Prostate gland (tissue), 2 donors: ENCODE measurements at regions of chr20 and their contacts with region 1.

Region 1: GRCh38 chr20:2651772-2652723 is at the start of gene NOP56:
- DNase-seq: peak; percentile 87
- H3K4me3 ChIP-seq: peak within 1 kb of the TSS; percentile 77 to 91
- H3K27ac ChIP-seq: peak within 1 kb of the TSS; percentile 81 to 82
- H3K4me1 ChIP-seq: peaks cover 8% of the 10 kb centered on the region
- H3K27me3 ChIP-seq: no peaks in the 10 kb centered on the region
- CTCF ChIP-seq: peak in 2 of 4 experiments; percentile 2 to 21
- POLR2A ChIP-seq: peak; percentile 63
- total RNA-seq, gene NOP56: 50.8 to 108 TPM

Region 2: GRCh38 chr20:2261105-2261504 is 390.9 kb before region 1 on chr20:
- intact Hi-C with region 1: no loop called
- DNase-seq: no peak
- H3K4me3 ChIP-seq: no peak overlapping the region
- H3K27ac ChIP-seq: no peak overlapping the region
- H3K4me1 ChIP-seq: peaks cover 4% of the 10 kb centered on the region
- H3K27me3 ChIP-seq: no peaks in the 10 kb centered on the region
- CTCF ChIP-seq: no peak
- POLR2A ChIP-seq: no peak

Region 3: GRCh38 chr20:2523919-2524708 is 127.9 kb before region 1 on chr20:
- intact Hi-C with region 1: loop called (anchors 2 kb)
- DNase-seq: peak; percentile 79
- H3K4me3 ChIP-seq: peak overlapping the region; percentile 50 to 67
- H3K27ac ChIP-seq: peak overlapping the region; percentile 60 to 81
- H3K4me1 ChIP-seq: no peaks in the 10 kb centered on the region
- H3K27me3 ChIP-seq: no peaks in the 10 kb centered on the region
- CTCF ChIP-seq: peak; percentile 82 to 95 (median 92)
- POLR2A ChIP-seq: peak; percentile 69

Region 4: DNA sequence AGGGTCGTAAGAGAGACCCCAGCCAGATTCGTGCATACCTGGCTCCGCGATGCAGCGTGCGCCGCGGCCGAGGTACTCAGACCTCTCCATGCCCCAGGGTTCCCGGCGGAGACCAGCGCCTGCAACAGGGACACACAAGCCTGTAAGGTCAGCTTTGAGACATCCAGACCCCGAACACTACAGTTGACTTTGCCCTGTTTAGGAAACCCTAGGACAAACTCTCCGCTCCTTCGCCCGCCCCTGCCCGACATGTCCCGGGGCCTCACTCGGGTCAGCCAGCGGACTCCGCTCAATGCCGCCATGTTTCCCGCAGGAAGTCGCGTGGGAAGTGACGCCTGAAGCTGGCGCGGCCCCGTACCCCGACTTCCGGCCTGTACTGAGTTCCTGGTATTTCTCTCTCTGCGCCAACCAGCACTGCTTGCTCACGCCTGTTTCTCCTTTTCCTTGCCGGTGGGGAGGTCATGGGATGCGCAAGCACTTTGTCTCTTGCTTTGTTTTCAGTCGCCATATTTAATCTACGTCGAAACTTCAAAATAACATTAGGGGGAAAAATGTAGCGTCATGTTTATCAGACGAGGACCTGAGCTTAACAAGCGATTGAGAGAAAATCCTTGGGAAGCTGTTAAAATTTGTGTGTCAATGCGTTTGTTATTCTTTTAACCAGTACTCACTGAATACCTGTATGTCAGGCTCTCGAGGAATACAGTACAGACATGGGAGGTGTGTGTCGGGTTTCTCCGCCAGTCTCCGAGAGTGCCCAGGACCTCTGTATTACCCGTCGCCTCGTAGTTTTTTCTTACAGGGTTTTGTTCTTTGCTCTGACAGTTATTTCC is 12.1 kb after region 1 on chr20 and contains the start of gene IDH3B:
- intact Hi-C with region 1: loop called (anchors 1 kb)
- DNase-seq: peak; percentile 92
- H3K4me3 ChIP-seq: peak within 1 kb of the TSS; percentile 74 to 95
- H3K27ac ChIP-seq: peak within 1 kb of the TSS; percentile 88 to 90
- H3K4me1 ChIP-seq: peaks cover 3% of the 10 kb centered on the region
- H3K27me3 ChIP-seq: no peaks in the 10 kb centered on the region
- CTCF ChIP-seq: peak in 1 of 4 experiments; percentile 12
- POLR2A ChIP-seq: peak; percentile 77
- total RNA-seq, gene IDH3B: 132 to 141 TPM

Region 5: DNA sequence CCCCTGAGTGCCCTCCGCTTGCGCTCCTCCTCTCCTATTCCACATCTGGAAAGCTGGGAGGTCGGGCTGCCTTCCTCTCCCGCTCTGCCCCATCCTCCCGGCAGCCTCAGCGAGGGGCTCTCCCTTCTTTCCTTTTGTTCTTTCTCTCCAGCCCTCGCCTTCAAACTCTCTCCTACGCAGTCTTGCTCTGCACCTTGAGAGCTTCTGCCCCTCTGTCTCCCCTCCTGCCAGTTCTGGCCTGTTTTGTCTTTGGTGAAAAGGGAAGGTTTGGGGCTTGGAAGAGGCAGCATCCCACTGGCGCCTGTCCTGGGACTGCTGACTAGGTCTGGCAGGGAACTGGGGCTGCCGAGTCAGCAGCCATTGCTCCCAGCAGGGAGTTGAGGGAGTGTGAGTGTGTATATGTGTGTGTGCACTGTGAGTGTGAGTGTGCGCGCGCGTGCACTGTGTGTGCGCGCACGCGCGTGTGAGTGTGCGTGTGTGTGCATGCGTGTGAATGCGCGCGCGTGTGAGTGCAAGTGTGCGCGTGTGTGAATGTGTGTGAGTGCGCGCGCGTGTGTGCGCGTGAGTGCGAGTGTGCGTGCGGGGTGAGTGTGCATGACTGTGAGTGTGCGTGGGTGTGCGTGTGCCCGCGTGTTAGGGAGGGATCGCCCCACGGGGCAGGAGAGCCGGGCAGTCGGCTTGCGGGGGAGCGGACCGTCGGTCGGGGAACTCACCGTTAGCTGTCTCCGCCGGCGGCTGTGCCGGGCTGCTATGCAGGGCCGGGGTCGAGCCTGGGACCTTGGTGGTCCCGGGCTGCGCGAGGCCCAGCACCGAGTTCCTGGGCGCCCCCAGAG is 147.9 kb after region 1 on chr20:
- intact Hi-C with region 1: no loop called
- DNase-seq: no peak
- H3K4me3 ChIP-seq: peak overlapping the region; percentile 27
- H3K27ac ChIP-seq: no peak overlapping the region
- H3K4me1 ChIP-seq: no peaks in the 10 kb centered on the region
- H3K27me3 ChIP-seq: no peaks in the 10 kb centered on the region
- CTCF ChIP-seq: no peak
- POLR2A ChIP-seq: no peak